ENCODE measurements at regions of chr10 and their contacts with region 1.

Region 1: GRCh38 chr10:130110246-130111112 is at the start of gene C10orf143:
- DNase-seq: peak; percentile 100
- ATAC-seq: peak; percentile 78
- H3K4me3 Mint-ChIP-seq: peak within 1 kb of the TSS; percentile 99
- H3K27ac Mint-ChIP-seq: peak within 1 kb of the TSS; percentile 99
- H3K4me1 Mint-ChIP-seq: peaks cover 43% of the 10 kb centered on the region
- H3K27me3 Mint-ChIP-seq: no peaks in the 10 kb centered on the region
- CTCF ChIP-seq: no peak
- total RNA-seq, gene C10orf143: 7.8 and 10.1 TPM in 2 replicates

Region 2: DNA sequence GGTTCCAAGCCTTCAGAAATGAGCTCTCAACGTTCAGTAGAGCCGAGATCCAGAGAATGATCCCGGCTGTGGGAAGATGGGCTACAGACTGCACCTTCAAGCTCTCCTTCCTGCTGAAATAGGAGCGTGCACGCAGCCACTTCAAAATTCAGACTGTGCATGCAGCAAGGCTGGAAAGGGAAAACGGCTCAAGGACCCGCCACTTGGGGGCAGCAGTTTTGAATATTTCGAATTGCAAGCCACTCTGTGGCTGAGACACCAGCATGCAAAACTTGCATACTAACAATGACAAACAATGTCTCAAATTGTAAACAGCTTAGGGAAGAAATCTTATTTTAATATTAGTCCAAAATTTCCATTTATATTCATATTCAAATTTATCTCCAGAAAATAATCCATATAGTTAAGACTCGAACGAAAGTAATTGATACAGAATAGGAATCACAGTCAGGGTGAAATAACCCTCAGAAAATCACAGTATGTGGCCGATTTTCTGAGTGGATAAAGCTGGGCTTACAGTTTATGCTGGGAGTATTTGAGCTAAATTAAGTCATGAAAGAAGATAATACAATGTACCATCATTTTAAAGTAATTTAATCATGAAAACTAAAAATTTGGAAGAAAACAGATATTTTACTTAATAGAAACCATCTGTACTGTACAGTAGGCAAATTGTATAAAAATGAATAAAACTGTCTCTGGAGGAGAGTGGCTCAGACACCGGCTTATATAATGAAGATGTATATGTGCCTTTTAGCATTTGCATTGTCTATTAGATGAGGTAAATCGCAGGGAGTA is 1846.4 kb before region 1 on chr10:
- CTCF ChIA-PET with region 1: no interaction called
- POLR2A ChIA-PET with region 1: no interaction called
- intact Hi-C with region 1: loop called (anchors 5 kb)
- DNase-seq: no peak
- ATAC-seq: no peak
- H3K4me3 Mint-ChIP-seq: no peak overlapping the region
- H3K27ac Mint-ChIP-seq: no peak overlapping the region
- H3K4me1 Mint-ChIP-seq: no peaks in the 10 kb centered on the region
- H3K27me3 Mint-ChIP-seq: peaks cover 49% of the 10 kb centered on the region
- CTCF ChIP-seq: no peak

Region 3: DNA sequence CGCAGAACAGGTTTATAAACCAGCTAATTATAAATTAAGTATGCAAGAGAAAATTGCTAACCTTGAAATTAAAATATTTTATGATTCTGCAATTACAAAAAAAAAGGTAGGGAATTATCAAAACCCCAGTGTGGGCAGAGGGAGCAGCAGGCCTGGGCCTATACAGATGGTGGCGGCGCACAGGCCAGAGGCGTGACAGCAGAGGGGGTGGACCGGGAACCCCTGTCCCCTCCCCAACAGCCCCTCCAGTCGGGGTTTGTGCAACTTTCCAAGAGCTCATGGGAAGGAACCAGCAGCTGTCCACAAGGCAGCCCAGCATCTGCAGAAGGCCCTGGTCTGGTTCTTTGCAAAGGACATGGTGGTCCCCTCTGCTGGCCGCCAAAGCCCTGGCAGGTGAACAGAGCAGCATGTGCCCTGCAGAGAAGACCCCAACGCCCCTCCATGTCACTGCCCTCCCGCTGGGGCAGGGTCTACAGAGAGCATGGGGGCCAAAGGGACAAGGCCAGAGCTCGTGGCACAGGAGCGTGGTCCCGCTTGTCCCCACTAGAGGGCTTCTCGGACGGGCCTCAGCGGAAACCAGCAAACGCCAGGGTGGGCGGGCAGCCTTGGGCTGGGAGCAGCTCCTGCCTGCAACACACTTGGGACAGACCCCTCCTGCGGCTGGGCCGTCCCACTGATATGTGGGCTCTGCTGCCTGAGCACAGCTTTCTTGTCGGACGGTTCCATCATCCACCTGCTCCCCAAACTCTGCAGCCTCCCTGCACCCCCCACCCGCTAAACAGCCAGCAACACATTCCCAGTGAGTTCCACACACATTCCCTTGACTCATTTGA is 221.5 kb before region 1 on chr10:
- CTCF ChIA-PET with region 1: interaction called, 4 read pairs
- POLR2A ChIA-PET with region 1: no interaction called
- intact Hi-C with region 1: loop called (anchors 5 kb)
- DNase-seq: peak; percentile 21
- ATAC-seq: peak; percentile 42
- H3K4me3 Mint-ChIP-seq: no peak overlapping the region
- H3K27ac Mint-ChIP-seq: no peak overlapping the region
- H3K4me1 Mint-ChIP-seq: no peaks in the 10 kb centered on the region
- H3K27me3 Mint-ChIP-seq: peaks cover 6% of the 10 kb centered on the region
- CTCF ChIP-seq: no peak

Region 4: DNA sequence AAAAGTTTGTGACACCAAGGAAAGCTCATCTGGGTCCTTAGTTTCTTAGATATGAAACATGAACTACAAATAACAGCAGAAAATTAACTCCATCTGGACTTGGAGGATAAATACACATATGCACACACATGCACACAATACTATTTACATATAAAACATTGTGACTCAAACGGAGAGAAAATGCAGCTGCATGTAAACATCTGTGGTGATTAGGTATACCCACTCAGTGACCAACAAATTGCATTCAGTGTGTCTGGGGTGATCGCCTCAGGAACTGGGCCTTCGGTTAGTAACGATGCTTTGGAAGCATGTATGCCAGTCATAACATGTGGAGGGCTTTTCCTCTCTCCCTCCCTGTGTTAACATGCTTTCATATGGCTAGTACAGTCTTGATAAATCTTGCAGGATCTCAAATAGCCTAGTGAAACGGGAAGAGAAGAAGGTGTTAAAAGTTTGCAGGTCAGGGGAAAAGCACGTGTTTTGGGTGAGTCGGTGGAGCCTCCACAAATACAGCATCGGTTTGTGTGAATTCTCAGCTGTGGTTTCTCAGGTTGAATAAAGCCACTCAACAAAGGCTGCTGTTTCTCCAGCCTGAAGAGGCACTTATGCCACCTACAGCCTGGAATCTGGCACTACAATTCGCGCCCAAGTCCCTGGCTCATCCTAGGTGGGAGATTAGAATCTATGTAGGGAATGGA is 17.0 kb after region 1 on chr10:
- CTCF ChIA-PET with region 1: interaction called, 21 read pairs
- POLR2A ChIA-PET with region 1: interaction called, 9 read pairs
- intact Hi-C with region 1: loop called (anchors 1 kb)
- DNase-seq: no peak
- ATAC-seq: peak; percentile 85
- H3K4me3 Mint-ChIP-seq: no peak overlapping the region
- H3K27ac Mint-ChIP-seq: no peak overlapping the region
- H3K4me1 Mint-ChIP-seq: peaks cover 4% of the 10 kb centered on the region
- H3K27me3 Mint-ChIP-seq: peaks cover 35% of the 10 kb centered on the region
- CTCF ChIP-seq: no peak

Region 5: DNA sequence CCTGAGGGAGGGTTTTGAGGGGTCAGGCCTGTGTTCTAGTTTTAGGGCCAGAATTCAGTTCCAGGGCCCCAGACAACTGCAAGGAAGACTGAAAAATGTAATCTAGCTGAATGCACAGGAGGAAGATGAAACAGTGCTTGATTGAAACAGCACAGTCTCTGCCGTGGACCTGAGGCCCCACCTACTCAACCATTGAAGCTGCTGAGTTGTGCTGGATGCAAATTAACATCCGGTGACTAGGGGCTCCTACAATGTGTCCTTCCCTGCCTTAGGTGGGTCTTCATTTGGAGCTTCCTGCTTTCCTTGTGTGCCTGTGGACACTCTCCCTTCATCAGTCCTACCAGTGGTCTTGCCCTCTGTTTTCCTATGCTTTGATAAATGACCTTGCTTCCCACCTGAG is 31.4 kb after region 1 on chr10:
- CTCF ChIA-PET with region 1: interaction called, 31 read pairs
- POLR2A ChIA-PET with region 1: interaction called, 185 read pairs
- intact Hi-C with region 1: no loop called
- DNase-seq: no peak
- ATAC-seq: peak; percentile 93
- H3K4me3 Mint-ChIP-seq: peak overlapping the region; percentile 53
- H3K27ac Mint-ChIP-seq: peak overlapping the region; percentile 62
- H3K4me1 Mint-ChIP-seq: peaks cover 69% of the 10 kb centered on the region
- H3K27me3 Mint-ChIP-seq: no peaks in the 10 kb centered on the region
- CTCF ChIP-seq: no peak

Region 6: GRCh38 chr10:131900350-131901146 is 1790.1 kb after region 1 on chr10 and contains the start of gene PPP2R2D:
- CTCF ChIA-PET with region 1: no interaction called
- POLR2A ChIA-PET with region 1: no interaction called
- intact Hi-C with region 1: loop called (anchors 1 kb)
- DNase-seq: peak; percentile 96
- ATAC-seq: peak; percentile 91
- H3K4me3 Mint-ChIP-seq: peak within 1 kb of the TSS; percentile 89
- H3K27ac Mint-ChIP-seq: peak within 1 kb of the TSS; percentile 82
- H3K4me1 Mint-ChIP-seq: peaks cover 39% of the 10 kb centered on the region
- H3K27me3 Mint-ChIP-seq: peaks cover 6% of the 10 kb centered on the region
- CTCF ChIP-seq: no peak
- total RNA-seq, gene PPP2R2D: 28.0 and 32.7 TPM in 2 replicates